ENCODE measurements at regions of chr10 and their contacts with region 1.

Region 1: GRCh38 chr10:75127471-75127870 is 16.0 kb downstream of the SAMD8 start:
- DNase-seq: peak; percentile 82
- H3K4me3 ChIP-seq: no peak overlapping the region
- H3K27ac ChIP-seq: peak overlapping the region; percentile 72
- H3K4me1 ChIP-seq: peaks cover 25% of the 10 kb centered on the region
- H3K27me3 ChIP-seq: no peaks in the 10 kb centered on the region
- CTCF ChIP-seq: no peak
- POLR2A ChIP-seq: no peak

Region 2: GRCh38 chr10:74871595-74872382 is 255.7 kb before region 1 on chr10:
- CTCF ChIA-PET with region 1: no interaction called
- POLR2A ChIA-PET with region 1: no interaction called
- dilution Hi-C with region 1: no loop called
- intact Hi-C with region 1: no loop called
- DNase-seq: no peak
- H3K4me3 ChIP-seq: no peak overlapping the region
- H3K27ac ChIP-seq: no peak overlapping the region
- H3K4me1 ChIP-seq: no peaks in the 10 kb centered on the region
- H3K27me3 ChIP-seq: no peaks in the 10 kb centered on the region
- CTCF ChIP-seq: no peak
- POLR2A ChIP-seq: no peak

Region 3: GRCh38 chr10:74936577-74937501 is 190.6 kb before region 1 on chr10:
- CTCF ChIA-PET with region 1: no interaction called
- POLR2A ChIA-PET with region 1: no interaction called
- dilution Hi-C with region 1: no loop called
- intact Hi-C with region 1: no loop called
- DNase-seq: peak; percentile 77
- H3K4me3 ChIP-seq: no peak overlapping the region
- H3K27ac ChIP-seq: no peak overlapping the region
- H3K4me1 ChIP-seq: no peaks in the 10 kb centered on the region
- H3K27me3 ChIP-seq: no peaks in the 10 kb centered on the region
- CTCF ChIP-seq: no peak
- POLR2A ChIP-seq: no peak

Region 4: DNA sequence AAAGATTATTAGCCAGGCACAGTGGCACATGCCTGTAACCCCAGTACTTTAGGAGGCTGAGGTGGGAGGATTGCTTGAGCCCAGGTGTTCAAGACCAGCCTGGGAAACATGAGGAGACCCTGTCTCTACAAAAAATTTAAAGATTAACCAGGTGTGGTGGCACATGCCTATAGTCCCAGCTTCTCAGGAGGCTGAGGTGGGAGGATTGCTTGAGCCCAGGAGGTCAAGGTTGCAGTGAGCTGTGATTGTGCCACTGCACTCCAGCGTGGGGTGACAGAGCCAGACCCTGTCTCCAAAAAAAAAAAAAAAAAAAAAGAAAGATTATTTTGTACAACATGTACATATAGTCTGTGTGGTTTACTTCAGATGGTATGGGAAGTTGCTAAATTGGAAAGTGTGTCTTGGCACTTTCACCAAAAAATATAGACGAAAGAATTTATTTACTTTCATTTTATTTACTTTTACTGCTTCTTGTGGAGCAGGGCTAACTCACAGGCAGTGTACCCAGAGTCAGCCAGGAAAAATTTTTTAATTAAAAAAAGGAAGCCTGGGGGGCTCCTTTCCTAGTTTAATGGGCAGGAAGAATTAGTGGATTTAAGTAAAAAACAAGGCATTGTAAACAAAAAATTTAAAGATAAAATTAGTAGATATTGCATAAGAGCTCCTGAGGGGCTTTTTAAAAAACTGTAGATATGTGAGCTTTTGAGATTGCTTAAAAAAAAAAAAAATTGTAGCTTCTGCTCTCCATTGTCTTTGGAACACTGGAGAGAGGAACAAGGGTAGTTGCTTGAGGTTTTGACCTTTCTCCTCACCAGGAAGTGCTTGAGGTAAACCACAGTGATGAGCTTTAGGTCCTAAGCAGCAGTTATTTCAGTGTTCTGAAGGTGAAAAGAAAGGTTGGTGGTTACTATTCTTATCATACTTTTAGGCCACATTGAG is 38.5 kb after region 1 on chr10:
- CTCF ChIA-PET with region 1: no interaction called
- POLR2A ChIA-PET with region 1: no interaction called
- dilution Hi-C with region 1: no loop called
- intact Hi-C with region 1: no loop called
- DNase-seq: no peak
- H3K4me3 ChIP-seq: no peak overlapping the region
- H3K27ac ChIP-seq: no peak overlapping the region
- H3K4me1 ChIP-seq: no peaks in the 10 kb centered on the region
- H3K27me3 ChIP-seq: no peaks in the 10 kb centered on the region
- CTCF ChIP-seq: no peak
- POLR2A ChIP-seq: no peak

Region 5: GRCh38 chr10:75229971-75230370 is 102.5 kb after region 1 on chr10:
- CTCF ChIA-PET with region 1: no interaction called
- POLR2A ChIA-PET with region 1: no interaction called
- dilution Hi-C with region 1: no loop called
- intact Hi-C with region 1: loop called (anchors 5 kb)
- DNase-seq: peak; percentile 50
- H3K4me3 ChIP-seq: no peak overlapping the region
- H3K27ac ChIP-seq: peak overlapping the region; percentile 38
- H3K4me1 ChIP-seq: peaks cover 46% of the 10 kb centered on the region
- H3K27me3 ChIP-seq: no peaks in the 10 kb centered on the region
- CTCF ChIP-seq: no peak
- POLR2A ChIP-seq: no peak

Measured in endothelial cell of umbilical vein (primary cell).